A549 (cell line): ENCODE measurements at regions of chr22 and their contacts with region 1.

Region 1: DNA sequence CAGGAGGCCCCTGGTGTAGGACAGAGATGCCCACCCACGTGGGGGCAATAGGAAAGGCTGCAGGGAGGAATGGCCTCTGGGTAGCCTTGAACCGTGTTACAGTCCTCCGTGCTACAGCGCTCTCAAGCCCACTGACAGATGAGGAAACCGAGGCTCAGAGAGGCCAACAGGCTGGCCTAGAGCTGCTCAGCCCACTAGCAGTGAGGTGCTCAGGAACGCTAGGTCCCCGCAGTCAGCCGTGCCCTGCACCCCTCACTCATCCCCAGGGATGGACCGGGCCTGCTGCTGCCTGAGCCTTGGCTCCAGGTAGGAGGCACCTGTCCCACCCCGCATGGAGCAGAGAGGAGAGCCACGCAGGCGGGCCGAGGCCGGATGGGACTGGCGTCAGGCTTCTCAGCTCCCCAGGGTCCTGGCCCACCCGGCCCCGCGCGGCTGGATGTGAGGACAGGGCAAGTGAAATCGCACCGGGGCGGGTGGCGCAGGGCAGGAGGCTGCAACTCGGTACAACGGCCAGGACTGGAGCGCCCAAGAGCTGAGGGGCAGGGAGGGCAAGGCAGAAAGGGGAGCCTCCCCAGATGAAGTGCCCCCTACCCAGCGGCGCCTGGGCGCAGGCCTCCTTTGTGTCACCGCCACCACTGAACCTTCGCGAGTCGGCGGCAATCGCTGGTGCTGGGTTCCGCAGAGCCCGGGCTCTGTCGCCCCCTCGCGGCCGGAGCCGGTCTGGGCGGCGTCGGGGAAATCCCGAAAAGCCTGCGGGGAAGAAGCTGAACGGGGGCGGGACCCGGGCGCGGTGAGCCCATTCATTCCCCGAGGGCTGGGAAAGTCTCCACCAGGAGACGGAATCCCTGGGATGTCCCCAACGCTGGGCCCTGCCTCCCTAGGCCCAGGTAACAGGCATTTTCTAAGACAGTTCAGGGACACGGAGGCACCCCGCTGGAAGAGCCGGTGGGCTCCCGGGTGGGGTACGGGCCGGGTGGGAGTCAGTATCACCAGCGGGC is 8.4 kb upstream of the SLC2A11 start:
- DNase-seq: peak; percentile 55 to 76
- ATAC-seq: peak; percentile 83 to 94
- H3K4me3 ChIP-seq: 0 out of 3 replicates have a peak overlapping the region, but pooled peaks have one; percentile 23
- H3K27ac ChIP-seq: peak overlapping the region; percentile 33 to 75; a peak in 3 of 6 replicates
- H3K4me1 ChIP-seq: no peaks in the 10 kb centered on the region
- CTCF ChIP-seq: peak; percentile 83
- EP300 ChIP-seq: no peak
- POLR2A ChIP-seq: no peak
- RAD21 ChIP-seq: peak; percentile 84 to 93

Region 2: GRCh38 chr22:23539135-23539838 is 310.0 kb before region 1 on chr22:
- CTCF ChIA-PET with region 1: interaction called, 11 read pairs
- POLR2A ChIA-PET with region 1: no interaction called
- DNase-seq: peak; percentile 36 to 88
- ATAC-seq: peak; percentile 97 to 98
- H3K4me3 ChIP-seq: peak overlapping the region; percentile 31
- H3K27ac ChIP-seq: peak overlapping the region; percentile 66 to 81
- H3K4me1 ChIP-seq: peaks cover 38% of the 10 kb centered on the region
- CTCF ChIP-seq: peak; percentile 62
- EP300 ChIP-seq: no peak
- POLR2A ChIP-seq: 0 out of 2 replicates have a peak, but pooled peaks have one; percentile 7
- RAD21 ChIP-seq: peak; percentile 87 to 93

Region 3: DNA sequence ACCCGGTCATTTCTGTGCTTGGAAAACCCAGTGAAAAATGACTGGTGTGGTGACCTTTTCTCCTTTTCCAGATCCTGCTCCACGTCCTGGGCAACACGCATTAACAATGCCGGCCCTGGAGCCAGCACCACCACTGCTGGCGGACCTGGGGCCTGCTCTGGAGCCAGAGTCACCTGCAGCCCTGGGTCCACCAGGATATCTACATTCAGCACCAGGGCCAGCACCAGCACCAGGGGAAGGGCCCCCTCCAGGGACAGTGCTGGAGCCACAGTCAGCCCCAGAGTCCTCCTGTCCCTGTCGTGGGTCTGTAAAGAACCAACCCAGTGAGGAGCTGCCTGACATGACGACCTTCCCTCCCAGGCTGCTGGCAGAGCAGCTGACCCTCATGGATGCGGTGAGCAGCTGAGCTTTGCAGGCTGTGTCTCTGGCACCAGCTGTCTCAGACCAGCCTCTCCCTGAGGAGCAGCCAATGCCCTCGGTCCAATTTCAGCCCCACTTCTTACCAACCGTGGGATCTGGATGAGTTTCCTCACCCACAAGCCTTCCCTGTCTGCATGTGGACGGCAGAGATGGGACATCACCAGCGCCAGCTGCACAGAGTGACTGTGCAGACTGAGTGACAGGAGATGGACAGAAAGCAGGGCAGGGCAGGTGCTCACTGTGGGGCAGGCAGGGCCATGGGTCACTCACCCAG is 156.6 kb before region 1 on chr22:
- CTCF ChIA-PET with region 1: no interaction called
- POLR2A ChIA-PET with region 1: no interaction called
- DNase-seq: no peak
- ATAC-seq: no peak
- H3K4me3 ChIP-seq: no peak overlapping the region
- H3K27ac ChIP-seq: no peak overlapping the region
- H3K4me1 ChIP-seq: no peaks in the 10 kb centered on the region
- CTCF ChIP-seq: no peak
- EP300 ChIP-seq: no peak
- POLR2A ChIP-seq: no peak
- RAD21 ChIP-seq: no peak

Region 4: DNA sequence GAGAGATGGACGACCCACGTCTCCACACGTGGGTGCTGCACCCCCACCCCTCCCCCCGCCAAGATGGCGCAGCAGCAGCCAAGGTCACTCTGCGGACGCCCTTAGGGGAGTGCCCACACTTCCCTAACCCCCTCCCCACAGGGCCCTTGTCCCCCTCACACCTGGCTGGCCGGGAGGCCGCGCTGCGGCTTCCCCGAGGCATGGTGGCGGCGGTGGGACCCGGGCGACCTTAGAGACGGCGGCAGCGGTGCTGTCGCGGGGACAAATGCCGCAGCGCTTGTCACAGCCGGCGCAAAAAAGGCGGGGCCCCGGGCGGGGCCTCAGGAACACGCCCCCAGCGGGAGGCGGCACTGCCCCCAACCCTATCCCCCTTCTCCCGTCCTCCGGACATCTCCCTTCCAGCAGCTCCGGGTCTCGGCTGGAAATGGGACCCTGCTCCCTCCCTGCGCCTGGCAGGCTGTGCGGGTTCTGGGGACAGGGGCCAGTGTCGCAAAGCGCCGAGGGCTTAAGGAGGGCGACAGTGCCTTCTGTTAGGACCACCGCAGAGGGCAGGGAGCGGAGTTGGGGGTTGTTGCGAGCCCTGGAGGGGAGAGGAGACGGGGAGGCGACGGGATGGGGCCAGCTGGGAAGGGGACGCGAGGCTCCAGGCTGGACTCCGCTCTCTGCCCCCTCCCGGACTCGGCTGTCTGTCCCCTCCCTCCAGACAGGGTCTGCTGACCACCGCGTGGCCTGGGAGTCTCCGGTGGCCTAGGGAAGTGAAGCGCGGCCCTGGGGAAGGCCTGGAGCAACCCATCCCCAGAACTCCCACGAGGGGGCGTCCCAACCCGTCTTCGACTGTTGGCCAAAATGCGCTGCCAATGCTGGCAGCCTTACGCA is 81.4 kb before region 1 on chr22 and contains the start of gene CHCHD10:
- CTCF ChIA-PET with region 1: interaction called, 175 read pairs
- POLR2A ChIA-PET with region 1: interaction called, 3 read pairs
- DNase-seq: peak; percentile 65 to 77
- ATAC-seq: peak; percentile 79 to 87
- H3K4me3 ChIP-seq: peak within 1 kb of the TSS; percentile 66
- H3K27ac ChIP-seq: peak within 1 kb of the TSS; percentile 88 to 96
- H3K4me1 ChIP-seq: peaks cover 32% of the 10 kb centered on the region
- CTCF ChIP-seq: peak; percentile 55
- EP300 ChIP-seq: no peak
- POLR2A ChIP-seq: peak; percentile 52
- RAD21 ChIP-seq: peak; percentile 48 to 50
- polyA plus RNA-seq, gene CHCHD10: 33.0 and 59.4 TPM in 2 replicates

Region 5: GRCh38 chr22:23812378-23812777 is 36.9 kb before region 1 on chr22:
- CTCF ChIA-PET with region 1: interaction called, 18 read pairs
- POLR2A ChIA-PET with region 1: no interaction called
- DNase-seq: no peak
- ATAC-seq: no peak
- H3K4me3 ChIP-seq: no peak overlapping the region
- H3K27ac ChIP-seq: no peak overlapping the region
- H3K4me1 ChIP-seq: no peaks in the 10 kb centered on the region
- CTCF ChIP-seq: no peak
- EP300 ChIP-seq: no peak
- POLR2A ChIP-seq: no peak
- RAD21 ChIP-seq: no peak

Region 6: GRCh38 chr22:23826465-23827199 is 22.7 kb before region 1 on chr22:
- CTCF ChIA-PET with region 1: interaction called, 21 read pairs
- POLR2A ChIA-PET with region 1: no interaction called
- DNase-seq: no peak
- ATAC-seq: no peak
- H3K4me3 ChIP-seq: no peak overlapping the region
- H3K27ac ChIP-seq: peak overlapping the region in 1 of 2 experiments; percentile 37; a peak in 1 of 6 replicates
- H3K4me1 ChIP-seq: no peaks in the 10 kb centered on the region
- CTCF ChIP-seq: no peak
- EP300 ChIP-seq: no peak
- POLR2A ChIP-seq: no peak
- RAD21 ChIP-seq: no peak

Region 7: DNA sequence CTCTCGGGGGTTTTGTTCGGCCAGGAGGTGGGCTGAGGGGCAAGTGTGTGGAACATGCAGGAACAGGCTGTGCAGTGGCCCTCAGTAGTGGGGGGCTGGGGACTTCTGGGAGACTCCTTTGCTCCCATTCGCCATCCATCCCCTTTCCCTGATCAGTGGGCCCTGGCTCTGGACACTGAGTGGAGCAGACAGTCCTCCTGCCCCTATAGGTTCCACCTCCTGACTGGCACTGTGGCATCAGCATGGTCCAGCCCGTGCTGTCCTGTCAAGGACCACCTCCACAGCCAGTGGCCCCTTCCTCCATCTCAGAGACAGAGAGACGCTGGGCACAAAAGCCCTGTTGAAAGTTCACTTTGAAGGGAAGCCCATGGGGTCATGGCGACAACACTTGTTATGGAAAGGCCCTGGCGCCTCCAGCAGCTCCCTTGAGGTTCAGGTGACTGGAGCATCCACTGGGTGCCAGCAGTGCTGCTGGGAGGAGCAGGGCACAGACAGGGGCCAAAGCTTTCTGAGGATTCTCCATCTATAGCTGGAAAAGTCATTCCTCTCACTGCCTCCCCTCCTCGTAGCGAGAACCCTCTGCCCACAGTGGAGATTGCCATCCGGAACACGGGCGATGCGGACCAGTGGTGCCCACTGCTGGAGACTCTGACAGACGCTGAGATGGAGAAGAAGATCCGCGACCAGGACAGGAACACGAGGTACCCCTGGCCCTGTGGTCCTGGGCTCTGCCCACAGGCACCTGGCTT is 16.1 kb before region 1 on chr22:
- CTCF ChIA-PET with region 1: interaction called, 31 read pairs
- POLR2A ChIA-PET with region 1: no interaction called
- DNase-seq: no peak
- ATAC-seq: no peak
- H3K4me3 ChIP-seq: no peak overlapping the region
- H3K27ac ChIP-seq: no peak overlapping the region
- H3K4me1 ChIP-seq: no peaks in the 10 kb centered on the region
- CTCF ChIP-seq: no peak
- EP300 ChIP-seq: no peak
- POLR2A ChIP-seq: no peak
- RAD21 ChIP-seq: no peak

Region 8: DNA sequence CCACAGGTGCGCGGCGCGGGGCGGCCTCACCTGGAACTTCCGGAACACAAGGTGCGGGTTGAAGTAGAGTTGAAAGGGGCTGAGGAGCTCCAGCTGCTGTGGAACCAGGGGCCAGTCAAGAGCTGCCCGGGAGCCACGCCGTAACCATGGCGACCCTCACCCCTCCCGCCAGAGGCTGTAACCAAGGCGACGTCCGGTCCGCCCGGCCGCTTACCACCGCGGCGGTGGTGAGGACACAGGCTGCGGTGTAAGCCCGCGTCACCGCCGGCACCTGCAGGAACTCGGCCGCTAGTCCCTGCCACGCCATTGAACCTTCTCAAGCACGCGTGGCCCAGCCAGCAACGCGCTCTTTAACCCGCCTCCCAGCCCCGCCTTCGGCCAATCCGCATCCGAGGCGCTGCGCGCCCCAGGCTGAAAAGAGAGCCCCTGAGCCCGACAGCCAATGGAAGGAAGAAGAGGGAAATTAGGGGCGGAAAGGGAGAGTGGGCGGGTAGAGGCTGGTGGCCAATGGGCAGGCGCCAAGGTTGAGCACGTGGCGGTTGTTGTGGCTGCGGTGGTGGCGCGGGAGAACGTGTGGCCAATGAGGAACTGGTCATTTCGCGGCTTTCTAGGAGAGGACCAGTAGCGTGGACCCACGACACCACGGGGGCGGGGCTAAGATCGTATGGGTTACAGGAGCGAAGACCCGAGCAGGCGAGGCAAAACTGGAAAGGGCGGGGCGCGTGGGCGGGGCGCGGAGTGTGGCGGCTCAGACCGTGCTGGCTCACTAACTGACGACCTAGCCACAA is 10.4 kb before region 1 on chr22 and contains the start of gene DERL3:
- CTCF ChIA-PET with region 1: interaction called, 31 read pairs
- POLR2A ChIA-PET with region 1: no interaction called
- DNase-seq: peak; percentile 71 to 91
- ATAC-seq: peak; percentile 71 to 91
- H3K4me3 ChIP-seq: peak within 1 kb of the TSS; percentile 35
- H3K27ac ChIP-seq: peak within 1 kb of the TSS in 1 of 2 experiments; percentile 60; a peak in 1 of 6 replicates
- H3K4me1 ChIP-seq: peaks cover 10% of the 10 kb centered on the region; the same call in 1 of the 3 replicates
- CTCF ChIP-seq: no peak
- EP300 ChIP-seq: no peak
- POLR2A ChIP-seq: no peak
- RAD21 ChIP-seq: no peak
- polyA plus RNA-seq, gene DERL3: 0.08 and 0.34 TPM in 2 replicates